ENCODE measurements at regions of chr12 and their contacts with region 1.

Region 1: GRCh38 chr12:26732005-26732908 is 100.7 kb downstream of the ITPR2 start:
- DNase-seq: peak; percentile 29
- CTCF ChIP-seq: no peak

Region 2: GRCh38 chr12:26711569-26711968 is 20.7 kb before region 1 on chr12:
- CTCF ChIA-PET with region 1: interaction called, 16 read pairs
- POLR2A ChIA-PET with region 1: interaction called, 3 read pairs
- DNase-seq: no peak
- CTCF ChIP-seq: no peak

Region 3: DNA sequence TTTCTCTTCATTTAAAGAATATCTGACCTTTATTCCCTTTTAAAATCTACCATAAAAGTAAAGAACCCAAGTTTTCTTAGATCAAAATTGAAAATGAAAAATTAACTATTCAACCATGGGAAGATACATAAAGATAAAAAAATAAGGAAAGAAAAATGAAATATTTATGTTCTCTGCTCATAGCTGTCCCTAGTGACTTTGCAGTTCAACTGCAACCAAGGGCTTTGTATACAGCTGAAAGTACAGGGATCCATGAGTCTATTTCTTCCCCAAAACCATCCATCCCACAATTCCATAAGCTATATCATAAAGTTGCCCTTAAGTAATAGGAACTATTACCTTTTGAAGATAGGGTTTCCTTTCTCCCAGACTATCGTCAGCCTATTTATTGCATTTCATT is 12.4 kb before region 1 on chr12:
- CTCF ChIA-PET with region 1: interaction called, 17 read pairs
- POLR2A ChIA-PET with region 1: no interaction called
- DNase-seq: no peak
- CTCF ChIP-seq: no peak

Region 4: DNA sequence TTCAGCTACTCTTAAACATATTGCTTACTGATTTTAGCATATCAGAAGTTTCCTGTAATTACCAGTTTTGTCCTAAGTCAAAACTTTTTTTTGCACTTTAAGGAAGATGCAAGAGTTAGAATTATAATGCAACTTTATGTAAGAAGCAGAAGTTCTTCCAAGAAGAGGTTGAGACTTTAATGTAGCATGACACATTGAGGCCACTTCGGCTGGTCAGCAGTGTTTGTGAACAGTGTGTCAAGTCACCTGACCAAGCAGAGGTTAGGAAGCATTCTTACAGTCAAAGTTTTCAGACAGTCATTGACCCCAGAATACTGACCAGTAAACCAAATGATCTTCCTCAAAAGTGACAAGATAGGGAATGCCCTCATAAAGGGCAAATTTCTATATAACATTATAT is 221.2 kb after region 1 on chr12:
- CTCF ChIA-PET with region 1: no interaction called
- POLR2A ChIA-PET with region 1: no interaction called
- DNase-seq: no peak
- CTCF ChIP-seq: no peak